Activated naive CD8-positive, alpha-beta T cell treated with anti-CD3 and anti-CD28 coated beads, Interleukin-2, amount 10 ng/mL, durations not matched to agents 7 days and 5 days (primary cell): ENCODE measurements at regions of chr9 and their contacts with region 1.

Region 1: GRCh38 chr9:137129456-137130175 is 9.3 kb upstream of the GRIN1 start:
- DNase-seq: peak; percentile 90
- ATAC-seq: peak; percentile 96
- H3K4me3 Mint-ChIP-seq: peak overlapping the region; percentile 89
- H3K27ac Mint-ChIP-seq: peak overlapping the region; percentile 78
- H3K4me1 Mint-ChIP-seq: peaks cover 26% of the 10 kb centered on the region
- H3K27me3 Mint-ChIP-seq: peaks cover 17% of the 10 kb centered on the region

Region 2: GRCh38 chr9:137070201-137070905 is 59.3 kb before region 1 on chr9 and contains the start of gene SAPCD2:
- POLR2A ChIA-PET with region 1: interaction called, 20 read pairs
- DNase-seq: peak; percentile 90
- ATAC-seq: peak; percentile 90
- H3K4me3 Mint-ChIP-seq: peak within 1 kb of the TSS; percentile 82
- H3K27ac Mint-ChIP-seq: peak within 1 kb of the TSS; percentile 91
- H3K4me1 Mint-ChIP-seq: peaks cover 22% of the 10 kb centered on the region
- H3K27me3 Mint-ChIP-seq: no peaks in the 10 kb centered on the region
- total RNA-seq, gene SAPCD2: 26.4 to 30.0 TPM

Region 3: DNA sequence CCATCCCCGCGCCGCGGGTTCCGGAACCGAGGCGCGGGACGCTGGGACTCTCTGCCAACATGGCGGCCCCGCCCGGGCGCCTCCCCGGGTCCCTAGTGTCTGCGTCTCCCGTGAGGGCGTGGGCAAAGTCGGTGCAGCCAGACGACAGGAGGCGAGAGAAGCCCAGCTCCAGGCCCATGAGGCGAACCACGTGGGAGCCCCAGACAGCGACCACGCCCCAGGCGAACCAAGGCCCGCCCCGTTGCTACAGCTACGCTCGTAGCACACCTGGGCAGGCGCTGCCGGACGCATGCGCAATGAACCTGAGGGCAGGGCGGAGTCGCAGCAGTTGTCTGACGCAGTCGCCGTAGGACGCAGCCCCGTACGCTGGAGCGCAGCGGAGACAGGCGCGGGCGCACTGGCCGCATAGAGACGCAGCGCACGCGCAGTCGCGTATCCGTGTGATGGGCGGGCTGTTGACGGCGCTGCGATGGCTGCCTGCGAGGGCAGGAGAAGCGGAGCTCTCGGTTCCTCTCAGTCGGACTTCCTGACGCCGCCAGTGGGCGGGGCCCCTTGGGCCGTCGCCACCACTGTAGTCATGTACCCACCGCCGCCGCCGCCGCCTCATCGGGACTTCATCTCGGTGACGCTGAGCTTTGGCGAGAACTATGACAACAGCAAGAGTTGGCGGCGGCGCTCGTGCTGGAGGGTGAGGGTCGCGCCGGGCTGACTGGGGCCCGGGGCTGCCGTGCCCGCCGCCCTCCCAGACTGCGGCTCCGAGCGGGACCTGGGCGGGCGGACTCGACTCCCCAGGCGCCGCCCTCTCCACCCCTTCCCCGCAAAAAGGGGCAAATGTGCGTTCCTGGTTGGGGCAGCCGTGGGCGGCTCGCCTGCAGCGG is 42.8 kb before region 1 on chr9 and contains the start of gene MAN1B1:
- POLR2A ChIA-PET with region 1: interaction called, 28 read pairs
- DNase-seq: peak; percentile 99
- ATAC-seq: peak; percentile 89
- H3K4me3 Mint-ChIP-seq: peak within 1 kb of the TSS; percentile 92
- H3K27ac Mint-ChIP-seq: peak within 1 kb of the TSS; percentile 93
- H3K4me1 Mint-ChIP-seq: peaks cover 23% of the 10 kb centered on the region
- H3K27me3 Mint-ChIP-seq: no peaks in the 10 kb centered on the region
- total RNA-seq, gene MAN1B1: 63.2 to 63.9 TPM

Region 4: DNA sequence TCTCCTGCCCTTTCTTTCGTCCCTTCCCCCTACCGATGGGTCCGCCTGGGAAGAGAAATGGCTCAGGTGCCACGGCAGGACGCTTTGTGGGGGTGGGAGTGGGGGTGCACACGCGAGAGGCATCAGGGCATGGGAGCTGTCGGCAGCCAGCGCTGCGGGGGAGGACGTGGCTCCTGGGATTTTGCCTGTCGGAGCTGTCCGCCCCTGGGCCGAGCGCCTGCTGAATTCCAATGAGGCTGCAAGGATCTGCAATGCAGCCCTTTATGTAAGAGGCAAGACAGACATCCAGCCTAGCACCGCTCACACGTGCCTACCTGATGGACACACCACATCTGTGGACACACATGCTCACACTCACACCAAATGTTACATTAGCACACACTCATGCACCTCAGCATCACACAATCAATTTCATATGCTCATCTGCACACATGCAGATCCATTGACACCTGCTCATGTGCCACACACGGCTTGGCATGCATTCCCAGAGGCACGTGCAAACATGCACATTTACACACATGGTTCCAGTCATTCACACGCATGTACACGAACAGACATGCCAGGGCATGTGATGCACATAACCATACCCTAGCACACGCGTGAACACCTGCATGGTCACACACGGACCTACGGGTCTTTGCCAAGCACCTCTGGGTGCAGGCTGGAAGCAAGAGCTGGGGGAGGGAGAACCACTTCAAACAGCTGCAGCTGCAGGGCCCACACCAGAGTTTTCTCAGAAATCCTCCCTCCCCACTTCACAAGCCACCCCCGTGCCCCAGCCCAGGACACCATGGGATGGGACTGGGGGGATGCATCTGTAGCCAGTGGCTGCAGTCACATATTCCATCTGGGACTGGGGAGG is 10.8 kb after region 1 on chr9:
- POLR2A ChIA-PET with region 1: no interaction called
- DNase-seq: no peak
- ATAC-seq: no peak
- H3K4me3 Mint-ChIP-seq: no peak overlapping the region
- H3K27ac Mint-ChIP-seq: no peak overlapping the region
- H3K4me1 Mint-ChIP-seq: peaks cover 8% of the 10 kb centered on the region
- H3K27me3 Mint-ChIP-seq: peaks cover 49% of the 10 kb centered on the region

Region 5: GRCh38 chr9:137200311-137201204 is 70.9 kb after region 1 on chr9 and contains the start of gene TPRN:
- POLR2A ChIA-PET with region 1: interaction called, 18 read pairs
- DNase-seq: peak; percentile 95
- ATAC-seq: peak; percentile 95
- H3K4me3 Mint-ChIP-seq: peak within 1 kb of the TSS; percentile 84
- H3K27ac Mint-ChIP-seq: peak within 1 kb of the TSS; percentile 86
- H3K4me1 Mint-ChIP-seq: peaks cover 20% of the 10 kb centered on the region
- H3K27me3 Mint-ChIP-seq: no peaks in the 10 kb centered on the region
- total RNA-seq, gene TPRN: 11.2 to 14.7 TPM

Region 6: GRCh38 chr9:137223078-137223970 is 93.7 kb after region 1 on chr9:
- POLR2A ChIA-PET with region 1: interaction called, 35 read pairs
- DNase-seq: peak; percentile 98
- ATAC-seq: peak; percentile 87
- H3K4me3 Mint-ChIP-seq: peak overlapping the region; percentile 84
- H3K27ac Mint-ChIP-seq: peak overlapping the region; percentile 82
- H3K4me1 Mint-ChIP-seq: peaks cover 7% of the 10 kb centered on the region
- H3K27me3 Mint-ChIP-seq: peaks cover 2% of the 10 kb centered on the region